AG04449 (cell line): ENCODE measurements at regions of chr22 and their contacts with region 1.

Region 1: DNA sequence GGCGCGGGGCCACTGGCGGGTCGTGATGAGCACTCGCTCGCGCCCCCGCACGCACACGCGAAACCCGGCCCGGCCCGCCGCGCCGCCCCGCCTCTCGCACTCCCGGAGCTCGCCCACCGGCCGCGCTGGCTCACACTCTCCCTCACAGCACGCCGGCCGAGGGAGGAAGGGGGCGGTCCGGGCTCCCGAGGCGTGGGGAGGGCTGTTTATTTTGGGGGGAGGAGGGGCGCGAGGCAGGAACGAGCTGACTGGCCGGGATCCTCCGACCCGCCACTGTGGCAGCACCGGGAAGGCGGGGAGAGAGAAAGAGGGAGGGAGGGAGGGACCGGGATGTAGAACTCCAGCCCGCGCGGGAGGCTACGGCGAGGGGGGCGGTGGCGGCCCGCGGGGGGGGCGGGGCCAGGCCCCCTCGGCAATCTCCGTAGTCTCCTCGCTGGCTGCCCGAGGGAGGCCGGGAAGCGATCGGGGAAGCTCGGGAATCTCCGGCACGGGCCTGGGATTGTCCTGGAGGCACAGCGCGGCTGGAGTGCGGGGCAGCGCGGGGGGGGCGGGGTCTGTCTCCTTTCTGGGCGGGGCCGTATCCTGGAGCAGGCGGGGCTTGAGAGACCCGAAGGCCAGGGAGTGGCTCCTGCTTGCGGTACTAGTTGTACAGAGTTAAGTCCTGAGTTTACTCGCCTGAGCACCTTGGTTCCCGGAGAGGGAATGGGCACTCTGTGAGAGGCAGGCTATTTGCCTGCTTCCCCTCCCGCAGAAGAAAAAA is at the start of gene RBFOX2:
- DNase-seq: peak; percentile 74
- H3K4me3 ChIP-seq: peak within 1 kb of the TSS; percentile 89
- CTCF ChIP-seq: no peak

Region 2: GRCh38 chr22:35971456-35972119 is 57.2 kb before region 1 on chr22:
- CTCF ChIA-PET with region 1: no interaction called
- POLR2A ChIA-PET with region 1: interaction called, 11 read pairs
- DNase-seq: peak; percentile 68
- H3K4me3 ChIP-seq: no peak overlapping the region
- CTCF ChIP-seq: no peak

Region 3: GRCh38 chr22:36052505-36053270 is 23.9 kb after region 1 on chr22:
- CTCF ChIA-PET with region 1: interaction called, 5 read pairs
- POLR2A ChIA-PET with region 1: interaction called, 13 read pairs
- DNase-seq: no peak
- H3K4me3 ChIP-seq: no peak overlapping the region
- CTCF ChIP-seq: no peak

Region 4: DNA sequence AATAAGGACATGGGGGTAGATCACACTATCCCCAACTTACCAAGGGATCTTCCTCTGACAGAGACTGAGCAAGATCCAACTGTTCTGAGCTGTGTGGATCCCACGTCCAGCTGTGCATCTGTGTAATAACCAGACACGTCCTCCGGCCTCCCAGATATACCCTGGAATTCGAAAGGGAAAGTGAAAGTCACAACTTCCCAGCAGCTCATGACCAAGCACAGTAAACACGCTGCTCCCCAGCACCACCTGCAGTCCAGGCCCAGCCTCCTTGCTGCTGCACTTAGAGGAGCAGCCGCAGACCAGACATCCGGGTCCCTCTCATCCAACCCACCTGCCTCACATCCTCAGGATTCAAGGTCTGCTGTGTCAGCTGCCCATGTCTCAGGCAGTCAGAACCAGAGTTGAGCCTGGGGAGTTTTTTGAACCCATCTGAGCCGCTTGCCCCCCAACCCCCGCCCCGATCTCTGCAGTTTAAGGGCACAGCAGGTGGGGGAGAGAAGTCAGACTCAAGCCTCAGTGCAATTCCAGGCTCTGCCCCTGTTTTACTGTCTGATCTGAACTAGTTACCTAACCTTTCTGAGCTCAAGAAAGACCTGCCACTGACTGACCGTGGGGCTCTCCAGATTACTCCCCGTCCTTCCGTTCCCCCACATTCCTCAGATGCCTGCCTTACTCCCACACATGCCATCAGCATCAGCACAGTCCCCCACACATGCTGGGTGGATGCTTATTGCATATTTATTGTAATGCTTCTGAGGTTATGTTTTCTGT is 210.8 kb after region 1 on chr22 and contains the start of gene APOL2:
- CTCF ChIA-PET with region 1: no interaction called
- POLR2A ChIA-PET with region 1: no interaction called
- DNase-seq: peak; percentile 67
- H3K4me3 ChIP-seq: peak within 1 kb of the TSS; percentile 75
- CTCF ChIP-seq: peak; percentile 83